ENCODE measurements at regions of chr15 and their contacts with region 1.

Region 1: DNA sequence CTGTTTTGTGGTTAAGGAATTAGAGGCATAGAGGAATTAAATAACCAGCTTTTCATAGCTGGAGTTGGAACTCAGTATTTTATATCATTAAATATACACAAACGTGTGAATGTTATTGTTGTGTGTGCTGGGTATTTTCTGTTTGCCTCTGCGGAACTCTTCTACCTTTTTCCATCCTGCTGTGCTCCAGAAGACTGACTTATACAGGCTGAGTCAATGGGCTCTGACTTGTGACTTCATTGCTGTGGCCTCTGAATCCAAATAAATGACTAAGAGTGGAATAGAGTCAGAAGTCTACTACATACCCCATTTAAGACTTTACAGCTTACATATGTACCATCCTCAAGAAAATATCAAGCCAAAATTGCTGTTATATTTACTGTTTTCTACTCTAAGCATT is 17.6 kb downstream of the ARIH1 start:
- DNase-seq: no peak
- ATAC-seq: no peak
- H3K4me3 ChIP-seq: no peak overlapping the region
- H3K4me3 Mint-ChIP-seq: peak overlapping the region in 1 of 3 donors; percentile 24
- H3K27ac ChIP-seq: no peak overlapping the region
- H3K27ac Mint-ChIP-seq: no peak overlapping the region
- H3K4me1 ChIP-seq: peaks cover 4 to 28% of the 10 kb centered on the region in 2 experiments
- H3K4me1 Mint-ChIP-seq: peaks cover 86 to 92% (median 88%) of the 10 kb centered on the region in 3 donors
- H3K27me3 ChIP-seq: no peaks in the 10 kb centered on the region
- H3K27me3 Mint-ChIP-seq: no peaks in the 10 kb centered on the region

Region 2: GRCh38 chr15:72464251-72464650 is 27.5 kb before region 1 on chr15:
- CTCF ChIA-PET with region 1: interaction called in 1 of 2 experiments, 11 read pairs
- POLR2A ChIA-PET with region 1: interaction called in 1 of 2 experiments, 3 read pairs
- DNase-seq: no peak
- ATAC-seq: no peak
- H3K4me3 ChIP-seq: no peak overlapping the region
- H3K4me3 Mint-ChIP-seq: no peak overlapping the region
- H3K27ac ChIP-seq: no peak overlapping the region
- H3K27ac Mint-ChIP-seq: no peak overlapping the region
- H3K4me1 ChIP-seq: peaks cover 0 to 4% of the 10 kb centered on the region in 2 experiments
- H3K4me1 Mint-ChIP-seq: peaks cover 14 to 18% (median 15%) of the 10 kb centered on the region in 3 donors
- H3K27me3 ChIP-seq: no peaks in the 10 kb centered on the region
- H3K27me3 Mint-ChIP-seq: no peaks in the 10 kb centered on the region

Region 3: DNA sequence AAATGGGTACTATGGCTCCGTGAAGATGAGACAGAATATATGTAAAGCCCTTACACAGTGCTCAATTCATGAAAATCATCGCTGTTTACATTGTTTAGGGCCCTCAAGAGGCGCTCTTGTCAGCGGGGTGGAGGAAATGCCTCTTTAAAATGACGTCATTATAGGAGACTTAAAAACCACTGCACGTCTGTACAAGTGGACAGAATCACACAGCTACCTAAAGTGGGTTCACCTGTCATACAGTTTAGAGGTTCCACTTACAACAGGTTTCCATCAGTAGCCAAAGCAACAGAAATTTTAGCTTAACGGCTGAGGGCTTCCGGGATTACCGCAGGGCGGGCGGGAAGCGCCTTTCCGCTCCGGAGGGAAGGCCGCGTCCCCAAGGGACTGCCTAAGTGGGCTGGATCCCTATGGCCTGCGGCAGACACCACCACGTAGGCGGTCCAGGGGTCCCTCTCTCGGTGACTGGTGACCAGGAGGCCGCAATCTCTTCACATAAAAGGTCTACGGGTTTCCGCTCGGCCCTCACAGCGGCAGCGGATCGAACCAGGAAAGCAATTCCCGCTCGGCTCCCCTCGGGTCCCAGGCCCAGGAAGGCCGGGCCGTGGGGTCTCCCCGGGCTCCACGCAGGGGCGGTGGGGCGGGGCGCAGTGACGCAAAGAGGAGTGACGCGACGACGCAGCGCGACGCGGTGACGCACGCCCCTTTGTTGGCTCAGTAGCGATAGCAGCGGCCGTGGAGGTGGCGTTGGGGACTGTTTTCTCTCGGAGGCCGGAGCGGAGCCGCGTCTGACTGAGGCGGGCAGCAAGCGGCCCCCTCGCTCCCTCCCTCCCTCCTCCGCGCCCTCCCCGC is 17.9 kb before region 1 on chr15 and contains the start of gene ARIH1:
- CTCF ChIA-PET with region 1: interaction called in 1 of 2 experiments, 5 read pairs
- POLR2A ChIA-PET with region 1: interaction called, 8 to 12 read pairs
- DNase-seq: peak; percentile 89 to 99 (median 95)
- ATAC-seq: peak; percentile 80 to 84 (median 82)
- H3K4me3 ChIP-seq: peak within 1 kb of the TSS; percentile 90 to 94
- H3K4me3 Mint-ChIP-seq: peak within 1 kb of the TSS; percentile 88 to 96 (median 93)
- H3K27ac ChIP-seq: peak within 1 kb of the TSS; percentile 99
- H3K27ac Mint-ChIP-seq: peak within 1 kb of the TSS; percentile 95 to 99
- H3K4me1 ChIP-seq: peaks cover 30 to 35% of the 10 kb centered on the region in 2 experiments
- H3K4me1 Mint-ChIP-seq: peaks cover 51 to 68% (median 54%) of the 10 kb centered on the region in 3 donors
- H3K27me3 ChIP-seq: no peaks in the 10 kb centered on the region
- H3K27me3 Mint-ChIP-seq: no peaks in the 10 kb centered on the region
- total RNA-seq, gene ARIH1: 163 to 207 (median 178) TPM

Region 4: GRCh38 chr15:72616491-72617210 is 124.9 kb after region 1 on chr15:
- CTCF ChIA-PET with region 1: no interaction called
- POLR2A ChIA-PET with region 1: no interaction called
- DNase-seq: no peak
- ATAC-seq: no peak
- H3K4me3 ChIP-seq: no peak overlapping the region
- H3K4me3 Mint-ChIP-seq: no peak overlapping the region
- H3K27ac ChIP-seq: no peak overlapping the region
- H3K27ac Mint-ChIP-seq: no peak overlapping the region
- H3K4me1 ChIP-seq: peaks cover 2 to 6% of the 10 kb centered on the region in 2 experiments
- H3K4me1 Mint-ChIP-seq: peaks cover 5 to 13% (median 8%) of the 10 kb centered on the region in 3 donors
- H3K27me3 ChIP-seq: no peaks in the 10 kb centered on the region
- H3K27me3 Mint-ChIP-seq: no peaks in the 10 kb centered on the region

Region 5: GRCh38 chr15:72890043-72890442 is 398.3 kb after region 1 on chr15:
- CTCF ChIA-PET with region 1: no interaction called
- POLR2A ChIA-PET with region 1: no interaction called
- DNase-seq: no peak
- ATAC-seq: no peak
- H3K4me3 ChIP-seq: no peak overlapping the region
- H3K4me3 Mint-ChIP-seq: no peak overlapping the region
- H3K27ac ChIP-seq: no peak overlapping the region
- H3K27ac Mint-ChIP-seq: no peak overlapping the region
- H3K4me1 ChIP-seq: no peaks in the 10 kb centered on the region
- H3K4me1 Mint-ChIP-seq: no peaks in the 10 kb centered on the region
- H3K27me3 ChIP-seq: peaks cover 0 to 12% of the 10 kb centered on the region in 2 experiments
- H3K27me3 Mint-ChIP-seq: peaks cover 17 to 22% of the 10 kb centered on the region in 2 donors

Measured in T-cell (primary cell).